PC-9 (cell line): ENCODE measurements at regions of chr1 and their contacts with region 1.

Region 1: DNA sequence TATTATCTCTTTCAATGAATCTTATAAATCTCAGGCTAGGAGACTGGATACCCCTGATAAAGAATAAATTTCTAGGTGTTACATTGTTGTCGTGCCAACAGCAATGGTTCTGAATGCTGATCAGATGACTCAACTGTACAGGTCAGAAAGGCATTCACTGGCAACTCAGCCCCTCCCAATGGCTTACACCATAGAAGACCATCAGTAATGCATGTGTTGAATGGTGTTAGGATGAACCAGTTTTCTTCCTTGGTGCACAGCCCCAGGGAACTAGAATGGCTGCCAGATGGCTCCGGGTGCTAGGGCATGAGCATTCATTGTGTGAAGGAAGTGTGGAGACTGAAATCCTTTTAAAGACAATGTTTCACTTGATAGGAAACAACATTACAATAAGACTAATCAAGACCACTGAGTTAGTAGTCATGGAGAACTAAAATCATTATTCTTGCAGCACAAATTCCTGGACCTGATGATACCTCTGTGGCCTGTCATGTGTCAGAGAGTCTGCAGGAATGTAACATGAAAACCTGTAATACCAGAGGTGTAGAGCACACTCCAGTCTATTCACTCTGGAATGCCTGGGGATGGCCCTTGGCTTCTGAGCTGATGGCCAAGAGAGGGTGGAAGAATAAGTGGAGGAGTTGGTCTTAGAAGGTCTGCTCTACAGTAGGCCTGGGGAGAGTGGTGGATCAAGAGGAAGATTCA is 187.7 kb upstream of the LMO4 start:
- DNase-seq: peak; percentile 75 to 97
- H3K4me3 ChIP-seq: no peak overlapping the region
- H3K27ac ChIP-seq: peak overlapping the region; percentile 67
- H3K4me1 ChIP-seq: peaks cover 26% of the 10 kb centered on the region
- H3K27me3 ChIP-seq: no peaks in the 10 kb centered on the region
- CTCF ChIP-seq: no peak

Region 2: GRCh38 chr1:86846166-86846647 is 294.8 kb before region 1 on chr1:
- CTCF ChIA-PET with region 1: no interaction called
- POLR2A ChIA-PET with region 1: no interaction called
- intact Hi-C with region 1: no loop called
- DNase-seq: peak in 1 of 2 experiments; percentile 84
- H3K4me3 ChIP-seq: no peak overlapping the region
- H3K27ac ChIP-seq: 0 out of 2 replicates have a peak overlapping the region, but pooled peaks have one; percentile 5
- H3K4me1 ChIP-seq: peaks cover 13% of the 10 kb centered on the region
- H3K27me3 ChIP-seq: no peaks in the 10 kb centered on the region
- CTCF ChIP-seq: no peak

Region 3: DNA sequence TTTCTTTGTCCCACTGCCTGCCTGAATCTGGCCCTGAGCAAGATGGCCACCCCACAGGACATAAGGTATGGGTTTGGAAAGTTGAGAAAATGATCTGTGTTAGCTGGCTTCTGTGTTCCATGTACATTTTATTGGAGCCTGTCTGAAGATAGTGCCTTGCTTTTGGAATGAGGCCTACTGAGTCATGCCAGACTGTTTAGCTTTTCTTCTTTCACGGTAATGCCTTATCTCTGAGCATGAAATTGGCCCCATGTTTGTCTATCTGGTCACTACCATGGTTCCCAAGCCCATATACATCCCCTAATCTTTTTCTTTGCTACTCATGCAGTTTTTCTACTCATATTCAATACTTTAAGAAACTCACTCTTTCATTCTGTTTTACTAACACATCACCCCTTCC is 102.6 kb after region 1 on chr1:
- CTCF ChIA-PET with region 1: no interaction called
- POLR2A ChIA-PET with region 1: no interaction called
- intact Hi-C with region 1: loop called (anchors 2 kb)
- DNase-seq: no peak
- H3K4me3 ChIP-seq: no peak overlapping the region
- H3K27ac ChIP-seq: no peak overlapping the region
- H3K4me1 ChIP-seq: peaks cover 16% of the 10 kb centered on the region
- H3K27me3 ChIP-seq: no peaks in the 10 kb centered on the region
- CTCF ChIP-seq: no peak

Region 4: GRCh38 chr1:87464022-87464490 is 323.1 kb after region 1 on chr1:
- CTCF ChIA-PET with region 1: no interaction called
- POLR2A ChIA-PET with region 1: no interaction called
- intact Hi-C with region 1: no loop called
- DNase-seq: no peak
- H3K4me3 ChIP-seq: no peak overlapping the region
- H3K27ac ChIP-seq: no peak overlapping the region
- H3K4me1 ChIP-seq: no peaks in the 10 kb centered on the region
- H3K27me3 ChIP-seq: no peaks in the 10 kb centered on the region
- CTCF ChIP-seq: no peak